ENCODE measurements at regions of chr17 and their contacts with region 1.

Region 1: DNA sequence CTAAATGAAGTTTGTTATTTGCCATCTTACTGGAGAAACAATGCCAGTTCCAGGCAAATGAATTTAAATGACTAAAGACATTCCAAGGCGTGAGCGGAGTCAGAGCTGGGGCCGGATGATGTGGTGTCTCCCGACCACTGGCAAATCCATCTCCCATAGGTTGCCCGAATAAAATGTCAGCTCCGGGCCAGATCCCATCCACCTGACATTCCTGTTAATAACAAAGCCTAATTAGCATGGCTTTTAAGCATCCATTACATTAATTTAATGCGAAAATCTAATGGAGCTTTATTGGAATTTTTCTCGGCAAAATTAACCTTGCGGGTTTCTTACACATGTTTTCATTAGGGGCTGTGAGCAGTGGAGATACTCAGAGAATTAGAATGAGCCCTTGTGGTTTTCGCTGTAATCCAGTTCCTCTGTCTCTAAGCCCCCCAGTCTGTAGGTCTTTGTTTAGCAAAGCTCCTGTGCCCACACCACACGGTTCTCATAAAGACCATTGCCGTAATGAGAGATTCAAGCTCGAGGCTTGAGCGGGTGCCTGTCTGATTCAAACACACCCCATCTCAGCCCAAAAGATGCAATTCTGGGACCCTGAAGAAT is 123.3 kb downstream of the CCT6B start:
- DNase-seq: no peak
- H3K4me3 ChIP-seq: no peak overlapping the region
- H3K27ac ChIP-seq: no peak overlapping the region
- H3K4me1 ChIP-seq: no peaks in the 10 kb centered on the region
- H3K27me3 ChIP-seq: no peaks in the 10 kb centered on the region
- CTCF ChIP-seq: no peak

Region 2: GRCh38 chr17:34771891-34772290 is 66.1 kb before region 1 on chr17:
- intact Hi-C with region 1: loop called (anchors 10 kb)
- DNase-seq: no peak
- H3K4me3 ChIP-seq: no peak overlapping the region
- H3K27ac ChIP-seq: no peak overlapping the region
- H3K4me1 ChIP-seq: no peaks in the 10 kb centered on the region
- H3K27me3 ChIP-seq: no peaks in the 10 kb centered on the region
- CTCF ChIP-seq: no peak

Region 3: DNA sequence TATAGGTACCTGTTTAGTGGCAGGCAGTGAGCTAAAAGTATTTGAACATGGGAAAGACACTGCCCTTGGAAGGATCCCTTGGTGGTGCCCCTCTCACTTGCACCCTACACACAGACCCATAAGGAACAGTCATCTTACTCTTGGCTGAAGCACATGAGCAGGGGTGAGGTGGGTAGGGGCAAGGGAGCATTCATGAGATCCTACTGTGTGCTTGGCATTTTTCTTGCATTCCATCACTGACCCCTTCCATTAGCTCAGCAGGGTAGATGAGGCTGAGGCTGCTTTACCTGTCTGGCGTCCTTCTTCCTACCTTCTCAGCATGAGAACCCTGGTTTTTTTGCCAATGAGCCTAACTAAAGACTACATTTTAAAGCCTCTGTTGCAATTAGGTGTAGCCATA is 75.0 kb after region 1 on chr17:
- intact Hi-C with region 1: no loop called
- DNase-seq: no peak
- H3K4me3 ChIP-seq: no peak overlapping the region
- H3K27ac ChIP-seq: no peak overlapping the region
- H3K4me1 ChIP-seq: no peaks in the 10 kb centered on the region
- H3K27me3 ChIP-seq: no peaks in the 10 kb centered on the region
- CTCF ChIP-seq: no peak

Region 4: DNA sequence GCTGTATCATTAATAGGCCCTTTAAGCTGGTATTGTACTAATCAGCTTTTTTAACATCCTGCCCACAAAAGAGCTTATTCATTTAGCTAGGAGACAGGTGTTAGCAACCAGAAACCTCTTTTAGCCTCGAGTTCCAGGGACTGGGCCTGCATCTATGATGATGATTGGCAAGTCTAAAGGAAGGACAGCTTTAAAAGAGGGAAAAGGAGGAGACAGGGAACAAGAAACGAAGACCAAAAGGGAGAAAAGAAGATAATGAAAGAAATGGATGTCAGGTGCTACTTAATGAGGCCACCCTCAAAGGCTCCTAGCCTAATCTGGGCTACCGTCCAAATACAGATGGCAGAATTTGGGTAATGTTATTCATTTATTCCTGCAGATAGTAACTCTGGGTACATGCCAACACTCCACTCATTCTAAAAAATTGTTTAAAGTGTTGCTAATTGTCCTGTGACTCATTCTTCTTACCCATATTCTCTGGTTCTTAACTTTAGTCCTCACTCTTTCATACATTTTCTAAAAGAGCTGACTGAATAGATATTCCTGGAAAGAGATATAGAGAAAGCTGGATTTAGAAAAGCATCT is 244.2 kb after region 1 on chr17:
- intact Hi-C with region 1: no loop called
- DNase-seq: no peak
- H3K4me3 ChIP-seq: no peak overlapping the region
- H3K27ac ChIP-seq: peak overlapping the region; percentile 13
- H3K4me1 ChIP-seq: peaks cover 13% of the 10 kb centered on the region
- H3K27me3 ChIP-seq: no peaks in the 10 kb centered on the region
- CTCF ChIP-seq: no peak